HEK293T (cell line): ENCODE measurements at regions of chr11 and their contacts with region 1.

Region 1: DNA sequence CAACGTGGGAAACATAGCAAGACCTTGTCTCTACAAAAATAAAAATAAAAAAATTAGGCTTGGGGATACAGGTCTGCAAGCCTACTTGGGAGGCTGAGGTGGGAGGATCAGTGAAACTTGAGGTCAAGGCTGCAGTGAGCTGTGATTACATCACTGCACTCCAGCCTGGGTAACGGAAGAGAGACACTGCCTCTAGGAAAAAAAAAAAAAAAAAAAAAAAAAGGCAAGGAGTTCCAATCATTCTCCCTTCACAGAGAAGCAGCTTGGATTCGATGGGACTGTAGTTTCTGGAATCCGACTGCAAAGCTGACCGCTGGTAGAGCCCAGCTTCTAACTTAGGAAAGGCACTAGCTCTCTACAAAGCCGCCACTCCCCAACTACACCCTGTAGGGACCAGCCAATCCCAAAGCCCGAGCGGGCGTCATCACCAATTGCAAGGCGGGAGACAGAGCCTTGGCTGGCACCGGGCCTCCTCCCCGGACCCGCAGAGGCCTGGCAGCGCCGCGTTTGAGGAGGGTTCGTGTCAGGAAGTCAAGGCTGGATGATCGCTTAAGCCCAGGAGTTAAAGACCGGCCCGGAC is 699 bp upstream of the DDB2 start:
- DNase-seq: peak; percentile 80

Region 2: DNA sequence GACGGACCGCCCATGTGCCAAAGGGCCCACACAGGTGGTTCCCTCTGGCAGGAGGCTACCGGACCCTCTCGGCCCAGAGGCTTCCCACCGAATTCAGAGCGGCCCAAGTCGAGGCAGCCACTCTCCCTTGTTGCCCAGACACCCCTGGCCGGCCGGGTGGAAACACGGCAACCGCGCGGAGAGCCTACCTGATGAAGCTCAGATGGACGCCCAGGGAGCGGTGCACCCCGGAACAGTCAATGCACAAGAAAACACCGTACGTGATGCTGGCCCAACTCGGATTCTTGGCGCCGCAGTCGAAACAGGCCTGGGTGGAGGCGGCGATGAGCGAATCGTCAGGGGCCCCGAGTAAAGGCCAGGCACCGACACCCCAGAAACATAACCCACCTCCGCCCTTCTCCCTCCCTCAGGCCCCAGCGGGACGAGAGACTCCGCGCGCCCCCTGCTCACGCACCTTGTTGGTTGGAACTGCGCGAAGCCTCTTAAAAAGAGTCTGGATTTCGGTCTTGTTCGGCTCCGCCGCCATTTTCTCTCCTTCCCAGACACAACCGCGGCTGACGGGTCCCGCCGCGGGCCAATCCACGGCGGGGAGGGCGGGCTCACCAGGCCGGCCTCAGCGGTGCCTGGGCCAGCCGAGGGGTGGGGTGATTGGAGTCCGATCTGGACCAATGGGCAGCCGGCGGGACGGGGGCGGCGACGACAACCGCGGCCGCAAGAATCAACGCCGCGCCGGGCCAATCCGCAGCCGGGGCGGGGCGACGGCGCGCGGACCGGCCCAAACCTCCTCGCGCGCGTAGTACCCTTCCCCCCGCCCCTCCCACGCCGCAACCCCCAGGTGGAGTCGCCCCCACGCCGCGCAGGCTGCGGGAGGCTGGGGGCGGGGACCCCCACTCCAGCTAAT is 37.5 kb before region 1 on chr11 and contains the start of gene ARFGAP2:
- CTCF ChIA-PET with region 1: interaction called, 5 read pairs
- POLR2A ChIA-PET with region 1: interaction called, 11 read pairs
- DNase-seq: peak; percentile 99

Region 3: DNA sequence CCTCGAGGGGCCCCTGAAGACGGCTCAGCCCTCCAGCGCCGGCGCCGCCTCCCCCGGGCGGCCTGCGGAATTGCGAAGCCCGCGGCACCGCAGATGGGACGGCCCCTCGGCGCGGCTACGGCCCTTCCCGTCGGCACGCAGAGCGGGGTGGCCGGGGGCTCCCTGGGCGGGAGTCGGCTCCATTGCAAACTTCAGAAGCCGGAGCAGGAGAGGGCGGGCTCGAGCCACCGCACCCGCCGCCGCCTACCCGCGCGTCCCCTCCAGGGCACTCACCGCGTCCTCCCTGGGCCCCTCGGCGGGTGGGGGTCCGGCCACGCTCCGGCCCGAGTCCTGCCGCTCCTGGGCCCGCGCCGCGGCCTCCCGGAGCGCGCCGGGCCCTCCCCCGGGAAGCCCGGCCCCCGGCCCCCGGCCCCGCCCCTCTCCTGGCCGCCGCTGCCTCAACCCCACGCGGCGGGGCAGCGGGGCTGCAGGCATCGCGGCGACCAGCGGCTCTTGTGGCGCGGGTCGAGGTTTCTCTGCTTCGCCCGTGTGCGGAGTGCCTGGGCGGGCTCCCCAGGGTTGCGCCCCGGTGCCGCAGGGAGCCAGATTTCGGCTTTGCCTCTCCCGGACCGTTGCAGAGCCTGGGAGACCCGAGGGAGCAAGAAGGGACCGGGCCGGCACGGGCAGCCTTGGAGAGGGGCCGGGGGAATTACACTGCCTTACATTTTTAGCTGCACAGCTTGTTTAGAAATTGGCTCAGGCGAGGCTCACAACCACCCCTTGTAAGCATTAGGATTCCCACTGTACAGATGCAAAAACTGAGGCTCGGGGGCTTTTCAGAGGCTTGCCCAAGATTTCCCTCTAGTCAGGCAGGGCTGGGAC is 27.8 kb before region 1 on chr11 and contains the start of gene PACSIN3:
- CTCF ChIA-PET with region 1: interaction called, 3 read pairs
- POLR2A ChIA-PET with region 1: interaction called, 49 read pairs
- DNase-seq: peak; percentile 72

Region 4: DNA sequence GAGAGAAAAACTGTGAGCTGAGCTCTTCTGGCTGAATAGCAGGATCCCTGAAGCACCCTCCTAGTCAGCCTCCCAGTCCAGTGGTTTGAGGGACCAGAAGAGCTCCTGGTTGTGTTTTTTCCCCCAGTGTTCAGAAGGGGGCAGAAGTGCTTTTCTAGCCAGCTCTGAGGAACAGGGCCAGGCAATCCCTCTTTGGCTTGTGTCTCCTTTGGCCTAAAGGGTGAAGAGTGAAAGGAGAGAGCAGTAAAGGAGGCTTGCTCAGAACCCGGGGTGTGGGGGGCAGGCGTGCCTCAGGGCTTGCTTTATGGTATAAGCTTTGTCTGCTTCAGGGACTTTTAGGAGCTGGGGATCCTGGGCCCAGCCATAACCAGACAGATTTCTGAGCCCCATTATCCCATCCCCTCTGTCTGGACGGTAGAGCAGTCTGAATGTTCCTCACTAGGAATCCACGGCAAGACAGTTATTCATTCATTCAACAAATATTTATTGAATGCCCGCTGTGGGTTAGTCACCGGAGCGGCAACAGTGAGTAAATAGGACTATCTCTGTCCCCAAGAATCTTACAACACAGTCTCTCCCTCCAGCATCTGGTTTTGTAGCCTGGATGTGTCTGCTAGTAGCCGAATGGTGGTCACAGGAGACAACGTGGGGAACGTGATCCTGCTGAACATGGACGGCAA is 20.1 kb after region 1 on chr11:
- CTCF ChIA-PET with region 1: no interaction called
- POLR2A ChIA-PET with region 1: interaction called, 21 read pairs
- DNase-seq: no peak

Region 5: DNA sequence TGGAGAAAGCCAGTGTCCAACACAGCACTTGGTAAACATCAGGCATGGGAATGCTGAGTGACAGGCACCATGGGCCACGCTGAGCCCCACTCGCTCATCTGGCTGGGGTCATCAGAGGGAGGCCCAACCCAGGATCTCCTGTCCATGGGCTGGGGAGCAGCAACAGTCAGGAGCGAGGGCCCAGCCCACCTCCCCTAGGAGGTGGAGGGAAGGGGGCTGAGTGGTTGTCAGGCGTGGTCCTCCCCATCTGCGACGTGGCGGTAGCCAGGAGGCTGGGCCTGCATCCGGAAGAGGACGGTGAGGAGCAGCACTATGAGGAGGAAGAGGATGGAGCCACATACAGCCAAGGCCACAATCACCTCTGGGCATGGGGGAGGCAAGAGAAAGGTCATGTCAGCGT is 25.8 kb after region 1 on chr11:
- CTCF ChIA-PET with region 1: no interaction called
- POLR2A ChIA-PET with region 1: interaction called, 21 read pairs
- DNase-seq: no peak

Region 6: DNA sequence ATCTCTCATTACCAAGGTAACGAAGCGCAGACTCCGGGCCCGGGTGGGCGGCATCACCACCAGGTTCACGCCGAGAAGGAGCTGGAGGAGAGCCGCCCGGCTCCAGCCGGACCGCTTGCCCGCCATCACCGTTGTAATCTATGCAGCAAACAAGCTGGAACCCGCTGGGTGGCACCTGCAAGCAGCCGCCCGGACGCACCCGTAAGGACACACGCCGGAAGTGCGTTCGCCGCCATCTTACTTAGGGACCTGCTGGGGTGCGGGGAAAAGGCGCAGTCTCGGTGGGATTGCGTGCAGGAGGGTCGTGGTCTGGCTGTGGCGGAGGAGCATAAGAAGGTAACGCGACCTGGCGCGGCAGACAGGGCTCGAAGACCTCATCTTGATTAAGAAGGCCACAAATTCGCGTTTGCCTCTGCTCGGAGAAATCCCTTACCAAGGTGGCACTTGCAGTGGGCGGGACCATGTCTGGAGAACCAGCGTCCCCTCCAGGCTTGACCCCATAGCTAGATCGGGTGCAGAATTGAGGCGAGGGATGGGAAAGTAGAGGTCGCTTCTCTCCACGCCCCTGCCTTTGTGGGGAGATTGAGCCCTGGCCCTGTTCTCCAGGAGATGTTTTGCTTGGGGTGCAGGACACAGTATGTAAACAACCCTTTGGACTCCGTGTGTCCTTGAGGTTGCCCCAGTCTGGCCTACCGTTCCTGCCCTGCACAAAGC is 34.7 kb after region 1 on chr11 and contains the start of gene ACP2:
- CTCF ChIA-PET with region 1: no interaction called
- POLR2A ChIA-PET with region 1: interaction called, 43 read pairs
- DNase-seq: peak; percentile 89

Region 7: GRCh38 chr11:47259178-47259977 is 45.3 kb after region 1 on chr11:
- CTCF ChIA-PET with region 1: no interaction called
- POLR2A ChIA-PET with region 1: interaction called, 10 read pairs
- DNase-seq: peak; percentile 70